ENCODE measurements at regions of chr1 and their contacts with region 1.

Region 1: DNA sequence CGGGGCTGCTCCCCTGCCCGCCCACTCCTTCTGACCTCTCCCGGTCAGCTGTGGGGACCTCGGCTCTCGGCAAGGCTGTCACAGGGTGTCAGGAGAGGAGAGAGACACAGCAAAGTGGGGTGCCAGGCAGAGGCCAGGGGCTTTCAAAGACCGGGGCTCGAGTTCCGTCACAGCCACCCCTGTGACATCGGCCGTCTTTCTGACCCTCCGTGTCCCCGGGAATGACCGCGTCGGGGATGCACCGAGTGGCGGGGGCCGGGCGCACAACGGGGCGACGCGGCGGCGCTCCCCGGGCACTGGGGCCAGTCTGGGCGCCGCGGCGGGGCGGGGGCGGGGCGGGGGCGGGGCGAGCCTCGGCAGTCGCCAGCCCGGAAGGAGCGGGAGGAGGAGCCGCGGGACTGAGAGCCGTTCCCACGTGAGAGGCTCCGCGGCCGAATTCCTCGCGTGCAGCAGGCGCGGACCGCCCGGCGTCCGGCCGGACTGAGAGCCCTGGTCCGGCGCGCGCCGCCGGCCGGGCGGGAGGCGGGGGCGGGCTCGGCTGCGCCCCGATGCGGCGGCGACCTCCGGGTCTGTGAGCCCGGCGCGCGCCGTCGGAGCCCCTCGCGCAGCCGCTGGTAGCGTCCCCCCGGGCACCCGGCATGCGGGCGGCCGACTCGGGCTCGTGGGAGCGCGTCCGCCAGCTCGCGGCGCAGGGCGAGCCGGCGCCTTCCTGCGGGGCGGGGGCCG is 229.7 kb upstream of the TMEM51 start:
- DNase-seq: peak; percentile 84
- ATAC-seq: peak; percentile 81

Region 2: DNA sequence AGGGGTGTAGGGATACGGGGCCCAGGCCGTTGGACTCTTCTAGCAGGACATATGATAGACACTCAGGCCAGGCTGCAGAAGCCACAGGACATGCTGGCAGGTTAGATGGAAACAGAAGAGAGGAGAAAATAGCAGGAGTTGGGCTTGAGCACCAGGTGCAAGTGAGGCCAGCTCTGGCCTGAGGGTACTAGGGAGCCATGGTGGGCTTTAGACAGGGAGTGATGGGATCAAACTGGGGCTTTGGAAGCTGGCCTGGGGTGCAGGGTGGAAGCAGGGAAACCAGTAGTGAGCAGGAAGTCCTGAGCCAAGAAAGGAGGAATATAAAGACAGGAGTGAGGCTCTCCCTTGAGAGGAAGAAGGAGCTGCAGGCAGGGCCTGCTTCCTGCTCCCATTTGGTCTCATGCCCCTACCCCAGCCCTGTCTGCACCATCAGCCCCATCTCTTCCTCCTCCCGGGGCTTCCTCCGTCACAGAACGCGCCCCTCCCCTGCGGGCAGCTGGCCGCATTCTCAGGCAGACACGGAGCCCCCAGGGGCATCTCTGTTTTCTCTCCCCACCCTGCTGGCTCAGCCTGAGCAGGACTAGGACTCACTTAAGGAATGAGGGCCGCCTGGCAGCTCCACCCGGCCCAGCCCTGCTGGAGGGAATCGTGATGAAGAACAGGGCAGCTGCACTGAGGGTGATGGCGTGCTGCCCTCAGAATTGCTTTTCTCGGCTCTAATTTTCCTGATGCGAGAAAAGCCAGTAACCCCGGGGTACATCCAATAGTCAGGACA is 64.1 kb after region 1 on chr1:
- intact Hi-C with region 1: no loop called
- DNase-seq: peak; percentile 74
- ATAC-seq: peak; percentile 91

Region 3: GRCh38 chr1:15028102-15028501 is 104.2 kb after region 1 on chr1:
- intact Hi-C with region 1: loop called (anchors 5 kb)
- DNase-seq: peak; percentile 60
- ATAC-seq: peak; percentile 79